ENCODE measurements at regions of chr17 and their contacts with region 1.

Region 1: GRCh38 chr17:40358323-40359038 is 6.1 kb downstream of the GJD3 start:
- DNase-seq: peak; percentile 53 to 93
- H3K4me3 ChIP-seq: peak overlapping the region; percentile 1 to 33
- H3K27ac ChIP-seq: peak overlapping the region in 1 of 2 donors; percentile 31
- H3K4me1 ChIP-seq: no peaks in the 10 kb centered on the region
- H3K27me3 ChIP-seq: no peaks in the 10 kb centered on the region
- CTCF ChIP-seq: peak; percentile 89 to 99 (median 95)

Region 2: DNA sequence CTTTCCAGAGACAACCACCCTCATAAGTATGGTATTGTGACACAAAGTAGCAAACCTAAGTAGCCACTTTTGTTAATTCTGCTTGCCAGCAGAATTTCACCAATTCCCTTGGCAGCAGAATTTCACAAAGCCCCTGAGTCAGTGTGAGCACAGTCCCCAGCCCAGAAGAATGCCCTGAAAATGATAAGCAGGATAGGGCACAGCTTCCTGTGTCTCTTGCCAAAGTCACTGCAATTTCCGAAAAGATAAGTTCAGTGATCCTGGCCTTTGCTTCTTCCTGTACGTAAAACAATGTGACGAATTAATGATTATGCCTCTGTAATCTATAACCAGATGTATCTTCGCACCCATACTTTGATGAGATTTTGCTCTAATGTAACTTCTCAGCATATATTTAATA is 155.3 kb before region 1 on chr17:
- intact Hi-C with region 1: loop called (anchors 5 kb)
- DNase-seq: no peak
- H3K4me3 ChIP-seq: no peak overlapping the region
- H3K27ac ChIP-seq: no peak overlapping the region
- H3K4me1 ChIP-seq: no peaks in the 10 kb centered on the region
- H3K27me3 ChIP-seq: no peaks in the 10 kb centered on the region
- CTCF ChIP-seq: no peak

Region 3: GRCh38 chr17:40303009-40303657 is 55.3 kb before region 1 on chr17:
- intact Hi-C with region 1: loop called (anchors 1 kb)
- DNase-seq: peak in 1 of 2 donors; percentile 76
- H3K4me3 ChIP-seq: no peak overlapping the region
- H3K27ac ChIP-seq: no peak overlapping the region
- H3K4me1 ChIP-seq: peaks cover 0 to 10% of the 10 kb centered on the region in 2 donors
- H3K27me3 ChIP-seq: no peaks in the 10 kb centered on the region
- CTCF ChIP-seq: peak; percentile 68 to 78 (median 71)

Region 4: DNA sequence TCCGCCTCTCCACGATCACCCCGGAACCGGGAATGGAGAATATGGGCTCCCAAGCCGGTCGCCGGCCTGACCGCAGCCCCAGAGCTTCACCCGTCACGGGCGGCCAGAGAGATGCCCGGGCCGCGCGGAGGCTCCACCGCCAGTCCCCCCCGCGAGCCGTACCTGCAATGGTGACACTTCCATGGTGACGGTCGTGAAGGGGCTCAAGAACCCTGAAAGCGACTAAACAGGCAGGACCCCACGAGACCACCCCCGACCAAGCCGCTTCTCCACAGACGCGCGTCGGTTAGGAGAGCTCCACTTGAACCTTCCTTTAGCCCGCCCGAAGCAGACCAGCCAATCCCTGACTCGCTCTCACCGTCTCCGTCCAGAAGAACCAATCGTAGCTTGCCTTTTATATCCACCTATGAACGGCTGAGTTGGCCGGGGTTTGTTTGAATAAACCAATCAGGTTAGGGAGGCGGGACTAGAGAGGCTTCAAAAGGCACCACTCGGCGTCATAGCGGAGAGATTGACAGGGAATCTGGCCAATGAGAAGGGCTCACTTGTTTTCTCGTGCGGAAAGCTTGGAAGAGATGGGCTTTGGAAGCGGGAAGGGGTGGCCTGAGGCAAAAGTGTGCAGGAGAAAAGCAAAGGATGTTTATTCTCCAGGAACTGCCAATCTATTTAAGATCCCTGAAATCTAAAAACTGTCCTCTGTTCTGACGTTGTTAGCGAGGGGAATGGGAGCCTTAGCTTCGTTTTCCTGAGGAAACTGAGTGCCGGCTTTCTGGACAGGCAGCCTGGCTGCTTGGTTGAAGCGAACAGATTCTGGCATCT is 59.3 kb after region 1 on chr17 and contains the start of gene TOP2A:
- intact Hi-C with region 1: loop called (anchors 2 kb)
- DNase-seq: peak; percentile 96 to 99
- H3K4me3 ChIP-seq: peak within 1 kb of the TSS; percentile 55 to 69
- H3K27ac ChIP-seq: peak within 1 kb of the TSS; percentile 42 to 46
- H3K4me1 ChIP-seq: peaks cover 0 to 9% of the 10 kb centered on the region in 2 donors
- H3K27me3 ChIP-seq: no peaks in the 10 kb centered on the region
- CTCF ChIP-seq: no peak
- total RNA-seq, gene TOP2A: 0.11 TPM

Region 5: DNA sequence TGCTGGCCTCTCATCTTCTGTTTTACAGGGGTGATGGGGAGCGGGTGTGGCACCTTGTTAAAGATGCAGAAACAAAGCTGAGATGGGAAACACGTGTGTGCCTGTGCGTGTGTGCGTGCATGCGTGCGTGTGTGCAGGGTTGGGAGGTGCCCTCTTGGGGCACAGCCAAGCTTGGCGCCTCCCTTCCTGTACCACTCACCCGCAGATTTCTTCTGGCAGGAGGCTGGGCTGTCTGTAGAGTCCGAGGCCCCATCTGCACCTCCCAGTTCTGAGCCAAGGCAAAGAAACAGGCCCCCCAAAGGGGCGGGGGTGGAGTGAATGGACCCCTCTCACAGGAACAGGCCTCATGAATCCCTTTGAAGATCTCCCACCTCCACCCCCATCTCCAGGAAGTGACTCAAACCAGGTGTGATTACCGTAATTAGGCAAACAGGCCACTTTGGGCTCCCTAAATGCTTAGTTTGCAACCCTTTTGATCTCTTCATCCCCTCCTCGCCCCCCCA is 122.1 kb after region 1 on chr17:
- intact Hi-C with region 1: loop called (anchors 1 kb)
- DNase-seq: no peak
- H3K4me3 ChIP-seq: no peak overlapping the region
- H3K27ac ChIP-seq: no peak overlapping the region
- H3K4me1 ChIP-seq: peaks cover 0 to 4% of the 10 kb centered on the region in 2 donors
- H3K27me3 ChIP-seq: no peaks in the 10 kb centered on the region
- CTCF ChIP-seq: no peak

Region 6: GRCh38 chr17:40510328-40510648 is 151.8 kb after region 1 on chr17:
- intact Hi-C with region 1: no loop called
- DNase-seq: no peak
- H3K4me3 ChIP-seq: no peak overlapping the region
- H3K27ac ChIP-seq: no peak overlapping the region
- H3K4me1 ChIP-seq: no peaks in the 10 kb centered on the region
- H3K27me3 ChIP-seq: no peaks in the 10 kb centered on the region
- CTCF ChIP-seq: no peak

Region 7: DNA sequence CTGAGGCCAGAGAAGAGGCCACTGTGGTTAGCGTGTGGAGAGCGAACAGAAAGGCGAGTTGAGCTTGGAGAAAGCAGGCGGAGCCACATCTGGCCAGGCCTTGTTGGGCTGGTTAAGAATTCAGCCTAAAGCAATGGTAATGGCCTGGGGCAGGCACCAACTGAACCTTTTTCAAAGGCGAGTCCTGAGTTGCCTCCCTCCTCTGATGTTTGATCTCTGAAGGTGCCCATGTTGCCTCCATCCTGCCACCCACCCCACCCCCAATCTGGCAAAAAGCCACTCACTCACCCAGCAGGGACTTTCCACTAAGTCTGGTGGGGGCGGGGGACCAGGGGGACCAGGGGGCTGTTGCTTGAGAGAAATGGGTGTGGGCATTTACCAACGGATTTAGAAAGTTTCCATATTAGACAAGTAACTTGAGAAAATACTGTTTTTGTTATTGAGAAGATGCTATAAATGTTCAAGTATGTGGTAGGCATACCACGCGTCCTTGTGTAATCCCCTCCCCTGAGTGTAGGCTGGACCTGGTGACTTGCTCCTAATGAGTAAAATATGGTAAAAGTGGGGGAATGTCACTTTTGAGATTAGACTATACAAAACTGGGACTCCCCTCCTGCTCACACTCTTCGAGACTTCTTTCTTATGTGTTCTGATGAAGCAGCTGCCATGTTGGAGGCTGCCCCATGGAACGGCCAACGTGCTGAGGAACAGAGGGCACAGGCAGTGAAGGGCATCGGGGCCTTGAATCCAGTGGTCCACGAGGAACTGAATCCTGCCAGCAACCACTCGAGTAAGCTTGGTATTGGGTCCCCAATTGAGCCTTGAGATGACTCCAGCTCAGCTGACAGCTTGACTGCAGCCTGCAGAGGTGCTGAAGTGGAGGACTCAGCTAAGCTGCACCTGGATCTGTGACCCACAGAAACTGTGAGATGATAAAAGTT is 172.8 kb after region 1 on chr17:
- intact Hi-C with region 1: loop called (anchors 2 kb)
- DNase-seq: peak in 1 of 2 donors; percentile 33
- H3K4me3 ChIP-seq: no peak overlapping the region
- H3K27ac ChIP-seq: no peak overlapping the region
- H3K4me1 ChIP-seq: peaks cover 0 to 7% of the 10 kb centered on the region in 2 donors
- H3K27me3 ChIP-seq: no peaks in the 10 kb centered on the region
- CTCF ChIP-seq: no peak

Region 8: DNA sequence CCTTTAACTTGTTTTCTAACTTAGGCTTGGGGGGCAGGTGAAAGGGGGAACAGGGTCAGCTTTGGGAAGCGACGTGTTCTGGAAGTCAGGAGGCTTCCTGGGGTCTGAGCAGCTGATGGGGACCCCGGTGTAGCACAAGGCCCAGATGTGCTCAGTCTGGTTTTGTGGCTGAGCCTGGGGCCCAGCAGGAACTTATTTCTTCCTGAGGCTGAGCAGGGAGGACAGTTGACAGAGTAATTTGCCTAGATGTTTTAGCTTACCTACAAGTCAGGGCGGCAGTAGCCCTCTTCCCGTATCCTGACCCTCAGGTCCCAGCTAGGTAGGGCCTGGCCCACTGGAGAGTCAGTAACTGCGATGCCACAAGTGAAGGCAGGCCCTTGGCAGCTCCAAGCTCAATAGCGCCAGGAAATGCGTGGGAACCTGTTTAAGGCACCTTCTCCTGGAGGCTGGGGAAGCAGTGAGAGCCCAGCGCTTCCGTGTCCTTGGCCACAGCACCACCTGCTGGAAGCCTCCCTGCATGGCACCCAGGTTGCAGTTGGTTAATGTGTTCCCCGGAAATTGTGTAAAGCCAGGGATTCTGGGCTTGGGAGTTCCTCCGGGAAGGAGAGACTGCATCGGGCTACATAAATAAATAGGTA is 201.6 kb after region 1 on chr17:
- intact Hi-C with region 1: loop called (anchors 1 kb)
- DNase-seq: peak; percentile 43 to 91
- H3K4me3 ChIP-seq: peak overlapping the region in 1 of 2 donors; percentile 33
- H3K27ac ChIP-seq: peak overlapping the region in 1 of 2 donors; percentile 49
- H3K4me1 ChIP-seq: peaks cover 0 to 10% of the 10 kb centered on the region in 2 donors
- H3K27me3 ChIP-seq: no peaks in the 10 kb centered on the region
- CTCF ChIP-seq: peak; percentile 96 to 98 (median 97)

Measured in ascending aorta (tissue), 2 donors.